ENCODE measurements at regions of chr3 and their contacts with region 1.

Region 1: GRCh38 chr3:52536369-52537164 is at the start of gene UQCC5:
- DNase-seq: peak; percentile 98
- H3K4me3 Mint-ChIP-seq: peak within 1 kb of the TSS; percentile 100
- H3K27ac Mint-ChIP-seq: peak within 1 kb of the TSS; percentile 99
- H3K4me1 Mint-ChIP-seq: peaks cover 42% of the 10 kb centered on the region
- H3K27me3 Mint-ChIP-seq: no peaks in the 10 kb centered on the region
- total RNA-seq, gene UQCC5: 14.1 and 17.1 TPM in 2 replicates

Region 2: GRCh38 chr3:52197842-52198668 is 338.5 kb before region 1 on chr3 and contains the start of gene ALAS1:
- intact Hi-C with region 1: loop called (anchors 5 kb)
- DNase-seq: peak; percentile 96
- H3K4me3 Mint-ChIP-seq: peak within 1 kb of the TSS; percentile 100
- H3K27ac Mint-ChIP-seq: peak within 1 kb of the TSS; percentile 94
- H3K4me1 Mint-ChIP-seq: peaks cover 63% of the 10 kb centered on the region
- H3K27me3 Mint-ChIP-seq: peaks cover 2% of the 10 kb centered on the region
- total RNA-seq, gene ALAS1: 105 and 110 TPM in 2 replicates

Region 3: DNA sequence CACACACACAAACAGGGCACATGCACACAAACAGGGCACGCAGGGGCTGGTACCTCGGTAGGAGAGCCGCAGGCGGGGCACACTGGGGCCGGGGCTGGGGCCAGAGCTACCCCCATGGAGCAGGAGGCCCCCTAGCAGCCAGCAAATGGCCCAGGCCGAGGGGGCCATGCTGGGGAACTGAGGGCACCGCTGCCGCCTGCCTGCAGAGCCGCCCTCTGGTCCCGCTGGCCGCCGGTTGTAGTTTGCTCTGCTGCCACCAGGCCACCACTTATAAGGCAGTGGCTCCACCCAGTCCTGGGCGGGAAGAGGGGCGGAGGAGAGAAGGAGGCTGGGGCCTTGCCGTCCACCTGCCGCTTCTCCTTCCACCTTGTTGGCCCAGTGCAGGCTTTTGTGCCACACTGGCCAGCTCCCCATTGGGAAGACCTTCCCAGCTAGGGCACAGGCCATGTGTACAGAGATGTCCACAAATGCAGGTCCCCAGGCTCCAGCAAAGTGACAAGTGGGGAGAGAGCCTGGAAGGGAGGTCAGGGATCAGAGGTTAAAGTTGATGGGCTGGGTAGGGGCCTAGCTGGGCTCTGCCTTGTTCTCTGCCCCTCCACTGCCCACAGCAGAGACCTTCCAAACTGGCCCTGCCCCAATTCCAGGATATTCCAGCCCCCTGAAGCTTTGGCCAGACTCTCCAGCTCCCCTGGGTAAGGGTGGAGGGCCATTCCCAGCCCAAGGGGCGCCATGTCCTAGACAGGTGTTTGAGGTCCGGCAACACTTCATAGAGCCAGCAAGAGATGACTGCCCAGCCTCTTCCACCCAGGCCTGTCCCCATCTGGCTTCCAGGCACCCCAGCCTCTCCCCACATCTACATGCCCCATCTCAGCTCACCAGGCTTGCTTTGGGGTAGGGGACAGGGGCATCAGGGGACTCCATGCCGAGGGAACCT is 91.4 kb before region 1 on chr3 and contains the start of gene SEMA3G:
- intact Hi-C with region 1: loop called (anchors 2 kb)
- DNase-seq: peak; percentile 70
- H3K4me3 Mint-ChIP-seq: no peak within 1 kb of the TSS
- H3K27ac Mint-ChIP-seq: no peak within 1 kb of the TSS
- H3K4me1 Mint-ChIP-seq: peaks cover 7% of the 10 kb centered on the region
- H3K27me3 Mint-ChIP-seq: no peaks in the 10 kb centered on the region
- total RNA-seq, gene SEMA3G: 0.13 TPM in 1 of 2 replicates, not detected in the other

Region 4: DNA sequence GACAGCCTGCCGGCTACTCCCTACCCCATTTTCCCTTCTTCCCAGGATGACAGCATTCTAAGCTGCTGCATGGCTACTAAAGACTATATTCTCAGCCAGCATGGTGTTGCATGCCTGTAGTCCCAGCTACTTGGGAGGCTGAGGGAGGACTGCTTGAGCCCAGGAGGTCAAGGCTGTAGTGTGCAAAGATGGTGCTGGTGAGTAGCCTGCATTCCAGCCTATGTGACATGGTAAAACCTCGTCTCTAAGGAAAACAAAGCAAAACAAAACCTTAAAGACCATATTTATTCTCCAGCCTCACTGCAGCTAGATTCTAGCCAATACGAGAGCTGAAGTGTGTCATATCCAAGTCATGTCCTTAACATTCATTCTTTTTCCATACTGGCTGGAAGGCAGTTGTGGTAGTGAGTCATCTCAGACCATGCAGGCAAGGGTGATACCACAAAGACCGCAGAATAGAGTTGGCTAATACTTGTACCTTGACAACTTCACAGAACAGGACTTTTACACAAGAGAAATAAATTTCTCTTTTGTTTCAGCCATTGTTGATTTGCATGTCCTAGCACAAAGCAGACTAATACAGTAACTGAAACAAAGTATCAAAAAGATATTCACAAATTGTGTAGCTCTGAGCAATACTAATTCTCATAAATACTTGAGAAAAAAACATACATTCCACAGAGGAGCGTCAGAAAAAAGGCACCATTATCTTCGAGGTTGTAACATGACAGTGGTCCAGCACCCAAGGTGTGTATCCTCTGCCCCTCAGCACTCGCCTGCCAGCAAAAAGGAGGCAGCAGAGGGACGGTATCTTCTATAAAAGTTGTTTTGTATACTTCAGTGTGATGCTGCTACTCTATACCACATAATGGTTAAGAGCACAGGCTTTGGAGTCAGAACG is 134.3 kb after region 1 on chr3:
- intact Hi-C with region 1: loop called (anchors 1 kb)
- DNase-seq: peak; percentile 39
- H3K4me3 Mint-ChIP-seq: peak overlapping the region; percentile 64
- H3K27ac Mint-ChIP-seq: peak overlapping the region; percentile 98
- H3K4me1 Mint-ChIP-seq: peaks cover 33% of the 10 kb centered on the region
- H3K27me3 Mint-ChIP-seq: no peaks in the 10 kb centered on the region

Region 5: DNA sequence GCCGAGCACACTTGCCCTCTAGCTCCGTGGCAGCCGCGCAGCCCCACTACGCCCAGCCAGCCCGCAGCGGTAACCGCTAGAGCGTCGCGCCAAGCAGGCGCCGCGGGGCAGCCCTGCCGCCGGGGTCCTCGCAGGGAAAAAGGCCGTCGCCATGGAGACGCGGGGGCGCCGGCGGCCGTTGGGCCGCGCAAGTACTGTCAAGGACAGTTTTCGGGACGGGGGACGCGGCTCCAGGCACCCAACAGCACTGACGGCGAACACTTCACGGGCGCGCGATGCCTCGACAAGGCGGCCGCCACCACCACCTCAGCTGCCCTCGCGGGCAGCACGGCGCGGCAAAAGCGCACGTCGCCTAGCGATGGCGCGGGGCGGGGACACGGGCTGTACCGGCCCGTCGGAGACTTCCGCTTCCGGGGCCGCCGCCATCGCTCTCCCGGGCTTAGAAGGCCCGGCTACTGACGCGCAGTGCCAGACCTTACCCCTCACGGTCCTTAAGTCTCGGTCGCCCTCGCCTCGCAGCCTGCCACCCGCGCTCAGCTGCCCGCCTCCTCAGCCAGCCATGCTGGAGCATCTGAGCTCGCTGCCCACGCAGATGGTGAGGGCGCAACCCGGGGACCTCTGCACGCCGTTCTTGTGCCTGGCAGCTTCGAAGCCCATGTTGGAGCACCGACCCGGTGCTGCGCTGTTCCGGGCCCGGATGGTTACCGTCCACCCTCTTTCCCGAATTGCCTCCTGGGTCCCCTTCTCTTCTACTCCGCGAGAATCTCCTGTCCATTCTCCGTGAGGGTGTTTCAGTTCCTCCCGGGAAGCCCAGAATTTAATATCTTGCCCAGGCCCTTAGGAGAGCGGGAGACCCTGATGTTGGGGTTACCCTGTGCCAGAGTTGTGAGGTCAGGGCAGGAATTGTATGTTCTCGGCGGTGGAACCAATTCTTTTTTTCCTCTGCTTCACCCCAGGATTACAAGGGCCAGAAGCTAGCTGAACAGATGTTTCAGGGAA is 169.4 kb after region 1 on chr3 and contains the starts of genes GLT8D1 and SPCS1:
- intact Hi-C with region 1: loop called (anchors 1 kb)
- DNase-seq: peak; percentile 82
- H3K4me3 Mint-ChIP-seq: peak within 1 kb of the TSS; percentile 99
- H3K27ac Mint-ChIP-seq: peak within 1 kb of the TSS; percentile 94
- H3K4me1 Mint-ChIP-seq: peaks cover 33% of the 10 kb centered on the region
- H3K27me3 Mint-ChIP-seq: no peaks in the 10 kb centered on the region
- total RNA-seq, gene GLT8D1: 33.9 and 40.6 TPM in 2 replicates
- total RNA-seq, gene SPCS1: 122 and 132 TPM in 2 replicates

Region 6: GRCh38 chr3:54008104-54008503 is 1471.5 kb after region 1 on chr3:
- intact Hi-C with region 1: no loop called
- DNase-seq: no peak
- H3K4me3 Mint-ChIP-seq: no peak overlapping the region
- H3K27ac Mint-ChIP-seq: no peak overlapping the region
- H3K4me1 Mint-ChIP-seq: no peaks in the 10 kb centered on the region
- H3K27me3 Mint-ChIP-seq: no peaks in the 10 kb centered on the region

Measured in activated T-helper 1 cell treated with anti-CD3 and anti-CD28 coated beads, Interleukin-12 subunit alpha, Interleukin-12 subunit beta, Interleukin-2, Interleukin-4 antibody, amounts not matched to agents 30 ng/mL and 10 ng/mL and 1 ng/mL, durations not matched to agents 14 hours and 24 hours and 36 hours (primary cell).